Common myeloid progenitor, CD34-positive (primary cell): ENCODE measurements at regions of chr11 and their contacts with region 1.

Region 1: GRCh38 chr11:5712507-5712906 is 22.9 kb downstream of the TRIM22 start:
- DNase-seq: peak in 2 of 3 donors; percentile 42 to 57
- H3K4me3 ChIP-seq: no peak overlapping the region
- H3K27ac ChIP-seq: no peak overlapping the region
- H3K4me1 ChIP-seq: peaks cover 0 to 14% (median 12%) of the 10 kb centered on the region in 4 experiments
- H3K27me3 ChIP-seq: no peaks in the 10 kb centered on the region

Region 2: GRCh38 chr11:5700421-5701054 is 12.0 kb before region 1 on chr11:
- CTCF ChIA-PET with region 1: interaction called, 18 read pairs
- POLR2A ChIA-PET with region 1: no interaction called
- DNase-seq: peak in 2 of 3 donors; percentile 55 to 63
- H3K4me3 ChIP-seq: peak overlapping the region in 2 of 7 experiments; percentile 33 to 36
- H3K27ac ChIP-seq: no peak overlapping the region
- H3K4me1 ChIP-seq: no peaks in the 10 kb centered on the region
- H3K27me3 ChIP-seq: no peaks in the 10 kb centered on the region